Heart left ventricle (tissue), 16 donors: ENCODE measurements at regions of chr13 and their contacts with region 1.

Region 1: GRCh38 chr13:79679334-79679733 is 198.4 kb downstream of the NDFIP2 start:
- DNase-seq: peak; percentile 58 to 75 (median 69)
- ATAC-seq: peak in 3 of 4 donors; percentile 56 to 80 (median 72)
- H3K4me3 ChIP-seq: no peak overlapping the region
- H3K27ac ChIP-seq: no peak overlapping the region
- H3K4me1 ChIP-seq: peaks cover 0 to 8% (median 1%) of the 10 kb centered on the region in 12 donors
- H3K27me3 ChIP-seq: no peaks in the 10 kb centered on the region
- CTCF ChIP-seq: peak; percentile 67 to 84 (median 78)
- POLR2A ChIP-seq: no peak

Region 2: GRCh38 chr13:79589603-79590393 is 89.5 kb before region 1 on chr13:
- intact Hi-C with region 1: no loop called
- DNase-seq: no peak
- ATAC-seq: no peak
- H3K4me3 ChIP-seq: no peak overlapping the region
- H3K27ac ChIP-seq: no peak overlapping the region
- H3K4me1 ChIP-seq: peaks cover 0 to 3% (median 0%) of the 10 kb centered on the region in 12 donors
- H3K27me3 ChIP-seq: no peaks in the 10 kb centered on the region
- CTCF ChIP-seq: no peak
- POLR2A ChIP-seq: no peak

Region 3: DNA sequence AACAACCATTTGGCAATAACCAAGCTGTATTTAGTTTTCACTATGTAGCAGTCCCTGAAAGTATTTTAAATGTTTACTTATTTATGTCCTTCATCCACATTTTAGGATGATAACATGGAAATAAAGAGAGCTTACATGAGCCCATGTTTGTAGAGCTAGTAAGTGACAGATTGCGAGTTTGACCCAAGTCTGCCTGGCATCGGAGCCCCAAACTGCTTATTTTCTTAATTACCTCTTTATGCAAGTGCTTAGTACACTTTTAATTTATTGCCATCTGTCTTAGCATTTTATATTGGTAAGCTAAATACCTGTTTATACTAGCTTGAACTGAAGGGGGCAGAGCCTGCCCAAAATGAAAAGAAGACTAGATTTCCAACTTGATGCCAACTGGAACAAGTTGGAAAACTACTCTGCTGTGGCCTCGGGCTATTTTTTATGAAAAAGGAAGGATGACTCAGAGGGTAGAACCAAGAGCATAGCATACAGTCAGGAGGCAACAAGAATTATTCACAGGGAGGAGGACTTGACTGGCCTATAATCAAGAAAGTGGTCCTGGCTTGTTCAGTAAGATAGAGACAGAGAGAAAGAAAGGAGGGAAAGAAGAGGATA is 48.2 kb before region 1 on chr13:
- intact Hi-C with region 1: loop called in 4 of 10 experiments (anchors 5 kb)
- DNase-seq: peak in 1 of 5 donors; percentile 10
- ATAC-seq: peak in 3 of 4 donors; percentile 82 to 91 (median 90)
- H3K4me3 ChIP-seq: no peak overlapping the region
- H3K27ac ChIP-seq: peak overlapping the region in 2 of 12 donors; percentile 5 to 12
- H3K4me1 ChIP-seq: peaks cover 0 to 11% (median 0%) of the 10 kb centered on the region in 12 donors
- H3K27me3 ChIP-seq: no peaks in the 10 kb centered on the region
- CTCF ChIP-seq: peak in 10 of 12 donors; percentile 24 to 54 (median 38)
- POLR2A ChIP-seq: no peak

Region 4: DNA sequence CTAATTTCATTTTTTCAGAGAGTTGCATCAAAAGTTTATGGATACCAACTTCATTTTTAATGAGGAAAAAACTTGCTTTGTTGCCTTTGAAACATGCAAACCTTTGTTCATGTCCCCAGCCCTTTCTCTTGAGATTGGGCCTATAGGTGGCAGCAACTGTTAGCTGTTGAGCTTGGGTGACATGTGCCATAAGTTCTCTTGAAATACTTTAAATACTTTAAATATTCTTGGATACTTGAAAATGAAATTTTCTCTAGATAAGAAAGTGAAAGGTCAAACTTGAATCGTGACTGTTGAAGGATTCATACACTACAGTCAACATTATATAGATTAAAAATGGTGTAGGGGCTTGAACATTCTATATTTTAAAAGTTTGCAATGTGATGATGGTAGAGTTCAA is 96.5 kb after region 1 on chr13:
- intact Hi-C with region 1: loop called in 1 of 10 experiments (anchors 10 kb)
- DNase-seq: peak in 2 of 5 donors; percentile 17 to 37
- ATAC-seq: peak in 3 of 4 donors; percentile 61 to 70 (median 69)
- H3K4me3 ChIP-seq: no peak overlapping the region
- H3K27ac ChIP-seq: no peak overlapping the region
- H3K4me1 ChIP-seq: peaks cover 0 to 24% (median 4%) of the 10 kb centered on the region in 12 donors
- H3K27me3 ChIP-seq: no peaks in the 10 kb centered on the region
- CTCF ChIP-seq: peak in 11 of 12 donors; percentile 44 to 75 (median 60)
- POLR2A ChIP-seq: no peak

Region 5: GRCh38 chr13:80030491-80030890 is 351.2 kb after region 1 on chr13:
- intact Hi-C with region 1: loop called in 1 of 10 experiments (anchors 10 kb)
- DNase-seq: peak in 3 of 5 donors; percentile 15 to 34 (median 20)
- ATAC-seq: peak; percentile 55 to 87 (median 79)
- H3K4me3 ChIP-seq: no peak overlapping the region
- H3K27ac ChIP-seq: no peak overlapping the region
- H3K4me1 ChIP-seq: peaks cover 0 to 6% (median 0%) of the 10 kb centered on the region in 12 donors
- H3K27me3 ChIP-seq: no peaks in the 10 kb centered on the region
- CTCF ChIP-seq: peak in 10 of 12 donors; percentile 6 to 52 (median 35)
- POLR2A ChIP-seq: no peak

Region 6: GRCh38 chr13:81017513-81018152 is 1338.3 kb after region 1 on chr13:
- intact Hi-C with region 1: loop called in 5 of 10 experiments (anchors 5 to 10 kb)
- DNase-seq: no peak
- ATAC-seq: peak in 2 of 4 donors; percentile 61 to 69
- H3K4me3 ChIP-seq: peak overlapping the region in 3 of 12 donors; percentile 2 to 36 (median 18)
- H3K27ac ChIP-seq: peak overlapping the region in 1 of 12 donors; percentile 2
- H3K4me1 ChIP-seq: peaks cover 0 to 4% (median 0%) of the 10 kb centered on the region in 12 donors
- H3K27me3 ChIP-seq: no peaks in the 10 kb centered on the region
- CTCF ChIP-seq: peak; percentile 48 to 78 (median 61)
- POLR2A ChIP-seq: no peak